HepG2 (cell line): ENCODE measurements at regions of chr22 and their contacts with region 1.

Region 1: GRCh38 chr22:42863349-42863961 is 6.4 kb upstream of the ARFGAP3 start:
- DNase-seq: no peak
- ATAC-seq: no peak
- H3K4me3 ChIP-seq: no peak overlapping the region
- H3K27ac ChIP-seq: no peak overlapping the region
- H3K4me1 ChIP-seq: peaks cover 26% of the 10 kb centered on the region
- H3K27me3 ChIP-seq: no peaks in the 10 kb centered on the region
- CTCF ChIP-seq: no peak
- EP300 ChIP-seq: no peak
- POLR2A ChIP-seq: no peak
- RAD21 ChIP-seq: no peak

Region 2: GRCh38 chr22:43036282-43036829 is 172.9 kb after region 1 on chr22:
- CTCF ChIA-PET with region 1: interaction called, 3 read pairs
- POLR2A ChIA-PET with region 1: interaction called, 3 read pairs
- in situ Hi-C with region 1: no loop called
- intact Hi-C with region 1: loop called (anchors 1 kb)
- DNase-seq: no peak
- ATAC-seq: no peak
- H3K4me3 ChIP-seq: no peak overlapping the region
- H3K27ac ChIP-seq: no peak overlapping the region
- H3K4me1 ChIP-seq: peaks cover 52% of the 10 kb centered on the region
- H3K27me3 ChIP-seq: peaks cover 2 to 4% of the 10 kb centered on the region in 2 experiments; a peak in 3 of 5 replicates
- CTCF ChIP-seq: no peak
- EP300 ChIP-seq: no peak
- POLR2A ChIP-seq: no peak
- RAD21 ChIP-seq: no peak